Activated CD4-positive, alpha-beta memory T cell treated with anti-CD3 and anti-CD28 coated beads, Interleukin-2, amount 10 ng/mL, durations not matched to agents 7 days and 5 days (primary cell): ENCODE measurements at regions of chr4 and their contacts with region 1.

Region 1: DNA sequence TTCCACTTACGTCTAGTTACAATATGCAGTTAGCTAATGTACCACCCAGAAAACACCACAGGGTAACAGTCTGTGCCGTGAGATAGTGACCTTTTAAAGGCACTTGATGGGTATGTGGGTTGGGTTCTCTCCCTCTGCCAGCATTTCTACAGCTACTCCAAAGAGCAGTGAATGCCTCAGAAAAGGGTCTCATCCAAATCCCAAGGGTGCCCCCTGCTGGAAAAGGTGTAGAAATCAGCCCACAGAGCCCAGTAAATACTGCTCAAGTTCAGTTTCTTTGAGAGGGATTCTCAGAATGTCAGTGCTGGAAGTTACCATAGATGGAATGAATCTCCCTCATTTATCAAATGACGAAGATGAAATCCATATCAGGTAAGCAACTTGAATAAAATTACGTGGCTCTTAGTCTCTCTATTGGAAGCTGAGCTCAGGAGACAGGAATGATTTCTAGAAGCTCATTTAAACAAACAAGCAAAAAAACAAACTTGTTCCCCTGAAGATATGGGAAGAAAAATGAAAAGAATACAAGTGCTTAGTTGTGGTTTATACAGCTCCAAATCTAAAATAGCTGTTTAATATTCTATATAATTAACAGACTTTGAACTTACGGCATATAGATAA is 9.5 kb downstream of the RNF175 start:
- DNase-seq: peak; percentile 67
- H3K4me3 Mint-ChIP-seq: no peak overlapping the region
- H3K27ac Mint-ChIP-seq: no peak overlapping the region
- H3K4me1 Mint-ChIP-seq: no peaks in the 10 kb centered on the region
- H3K27me3 Mint-ChIP-seq: peaks cover 32% of the 10 kb centered on the region

Region 2: DNA sequence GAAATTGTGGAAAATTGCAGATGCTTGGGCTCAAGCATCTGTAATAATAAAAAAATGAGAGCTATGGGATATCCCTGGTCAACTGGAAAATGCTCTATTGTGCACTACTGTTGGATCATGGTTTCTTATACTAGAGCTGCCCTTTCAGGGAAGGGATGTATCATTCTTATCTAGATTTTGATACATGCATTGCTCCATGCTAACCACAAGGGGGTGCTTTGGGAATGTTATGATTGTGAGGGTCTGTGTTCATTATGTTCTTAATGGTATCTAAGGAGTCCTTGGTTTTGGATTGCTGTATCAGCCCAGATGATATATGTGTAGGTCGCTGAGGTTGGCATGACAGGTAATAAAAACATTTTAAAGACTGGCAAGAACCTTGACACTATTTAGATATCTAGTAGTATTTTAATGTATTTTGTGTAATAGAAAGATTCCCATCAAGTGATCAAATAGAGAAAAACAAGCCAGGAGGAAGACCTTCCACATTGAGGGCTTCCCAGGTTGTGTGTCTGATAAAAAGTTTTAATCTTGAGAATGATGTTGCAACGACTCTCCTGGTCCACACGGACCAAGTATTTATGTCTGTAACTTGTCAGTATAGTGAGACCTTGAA is 115.5 kb before region 1 on chr4:
- CTCF ChIA-PET with region 1: interaction called, 19 read pairs
- POLR2A ChIA-PET with region 1: no interaction called
- DNase-seq: no peak
- H3K4me3 Mint-ChIP-seq: no peak overlapping the region
- H3K27ac Mint-ChIP-seq: no peak overlapping the region
- H3K4me1 Mint-ChIP-seq: no peaks in the 10 kb centered on the region
- H3K27me3 Mint-ChIP-seq: no peaks in the 10 kb centered on the region

Region 3: DNA sequence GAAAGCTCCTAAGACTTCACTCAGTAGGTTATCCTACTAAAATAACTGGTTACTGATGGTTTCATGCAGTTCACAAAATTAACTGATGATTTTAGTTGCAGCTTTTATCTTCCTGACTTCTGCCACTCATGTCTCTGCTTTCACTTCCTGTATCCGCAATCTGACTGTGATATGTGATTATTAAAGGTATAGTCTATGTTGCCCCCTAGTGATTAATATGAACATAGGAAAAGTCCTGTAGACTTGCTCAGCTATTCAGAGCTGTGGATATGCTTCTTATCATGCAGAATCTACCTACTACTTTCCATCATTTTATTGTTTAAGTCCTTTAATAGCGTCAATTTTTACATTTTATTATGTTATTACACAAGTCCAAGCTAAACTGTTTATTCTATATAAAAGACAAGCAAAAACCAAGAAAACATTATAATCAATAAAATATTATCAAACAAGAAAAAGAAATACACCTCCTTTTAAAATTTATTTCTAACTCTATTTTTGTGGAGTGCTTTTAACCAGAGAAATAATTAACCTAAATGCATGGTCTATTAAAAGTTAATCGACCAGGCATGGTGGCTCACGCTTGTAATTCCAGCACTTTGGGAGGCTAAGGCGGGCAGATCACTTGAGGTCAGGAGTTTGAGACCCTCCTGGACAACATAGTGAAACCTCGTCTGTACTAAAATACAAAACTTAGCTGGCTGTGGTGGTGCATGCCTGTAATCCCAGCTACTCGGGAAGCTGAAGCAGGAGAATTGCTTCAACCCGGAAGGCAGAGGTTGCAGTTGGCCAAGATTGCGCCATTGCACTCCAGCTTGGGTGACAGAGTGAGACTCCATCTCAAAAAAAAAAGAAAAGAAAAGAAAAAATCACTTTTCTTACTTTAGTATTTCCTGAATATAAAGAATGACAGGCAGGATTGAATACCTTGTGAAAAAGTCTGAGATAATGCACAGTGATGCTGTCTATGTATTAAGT is 106.6 kb before region 1 on chr4:
- CTCF ChIA-PET with region 1: interaction called, 44 read pairs
- POLR2A ChIA-PET with region 1: interaction called, 4 read pairs
- DNase-seq: no peak
- H3K4me3 Mint-ChIP-seq: no peak overlapping the region
- H3K27ac Mint-ChIP-seq: no peak overlapping the region
- H3K4me1 Mint-ChIP-seq: peaks cover 9% of the 10 kb centered on the region
- H3K27me3 Mint-ChIP-seq: no peaks in the 10 kb centered on the region

Region 4: DNA sequence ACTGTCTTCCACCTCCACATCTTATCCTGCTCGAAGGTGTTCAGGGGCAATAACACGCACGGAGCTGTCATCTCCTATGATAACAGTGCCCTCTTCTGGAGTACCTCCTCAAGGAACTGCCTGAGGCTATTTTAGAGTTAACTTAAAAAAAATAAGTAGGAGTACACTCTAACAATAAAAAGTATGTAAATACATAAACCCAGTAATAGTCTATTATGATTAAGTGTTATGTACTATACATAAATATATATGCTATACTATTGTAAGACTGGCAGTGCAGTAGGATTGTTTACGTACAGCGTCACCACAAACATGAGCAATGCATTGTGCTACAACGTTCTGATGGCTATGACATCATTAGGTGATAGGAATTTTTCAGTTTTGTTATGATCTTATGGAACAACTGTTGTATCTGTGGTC is 100.7 kb before region 1 on chr4:
- CTCF ChIA-PET with region 1: interaction called, 44 read pairs
- POLR2A ChIA-PET with region 1: no interaction called
- DNase-seq: no peak
- H3K4me3 Mint-ChIP-seq: no peak overlapping the region
- H3K27ac Mint-ChIP-seq: no peak overlapping the region
- H3K4me1 Mint-ChIP-seq: peaks cover 31% of the 10 kb centered on the region
- H3K27me3 Mint-ChIP-seq: no peaks in the 10 kb centered on the region

Region 5: GRCh38 chr4:153684182-153684970 is 65.9 kb before region 1 on chr4 and contains the start of gene TLR2:
- CTCF ChIA-PET with region 1: interaction called, 11 read pairs
- POLR2A ChIA-PET with region 1: no interaction called
- DNase-seq: peak; percentile 55
- H3K4me3 Mint-ChIP-seq: peak within 1 kb of the TSS; percentile 61
- H3K27ac Mint-ChIP-seq: no peak within 1 kb of the TSS
- H3K4me1 Mint-ChIP-seq: peaks cover 13% of the 10 kb centered on the region
- H3K27me3 Mint-ChIP-seq: peaks cover 38% of the 10 kb centered on the region
- total RNA-seq, gene TLR2: 1.1 to 1.3 TPM

Region 6: GRCh38 chr4:153773236-153773690 is 23.0 kb after region 1 on chr4:
- CTCF ChIA-PET with region 1: no interaction called
- POLR2A ChIA-PET with region 1: no interaction called
- DNase-seq: no peak
- H3K4me3 Mint-ChIP-seq: no peak overlapping the region
- H3K27ac Mint-ChIP-seq: no peak overlapping the region
- H3K4me1 Mint-ChIP-seq: no peaks in the 10 kb centered on the region
- H3K27me3 Mint-ChIP-seq: peaks cover 39% of the 10 kb centered on the region